B cell (primary cell): ENCODE measurements at regions of chr9 and their contacts with region 1.

Region 1: DNA sequence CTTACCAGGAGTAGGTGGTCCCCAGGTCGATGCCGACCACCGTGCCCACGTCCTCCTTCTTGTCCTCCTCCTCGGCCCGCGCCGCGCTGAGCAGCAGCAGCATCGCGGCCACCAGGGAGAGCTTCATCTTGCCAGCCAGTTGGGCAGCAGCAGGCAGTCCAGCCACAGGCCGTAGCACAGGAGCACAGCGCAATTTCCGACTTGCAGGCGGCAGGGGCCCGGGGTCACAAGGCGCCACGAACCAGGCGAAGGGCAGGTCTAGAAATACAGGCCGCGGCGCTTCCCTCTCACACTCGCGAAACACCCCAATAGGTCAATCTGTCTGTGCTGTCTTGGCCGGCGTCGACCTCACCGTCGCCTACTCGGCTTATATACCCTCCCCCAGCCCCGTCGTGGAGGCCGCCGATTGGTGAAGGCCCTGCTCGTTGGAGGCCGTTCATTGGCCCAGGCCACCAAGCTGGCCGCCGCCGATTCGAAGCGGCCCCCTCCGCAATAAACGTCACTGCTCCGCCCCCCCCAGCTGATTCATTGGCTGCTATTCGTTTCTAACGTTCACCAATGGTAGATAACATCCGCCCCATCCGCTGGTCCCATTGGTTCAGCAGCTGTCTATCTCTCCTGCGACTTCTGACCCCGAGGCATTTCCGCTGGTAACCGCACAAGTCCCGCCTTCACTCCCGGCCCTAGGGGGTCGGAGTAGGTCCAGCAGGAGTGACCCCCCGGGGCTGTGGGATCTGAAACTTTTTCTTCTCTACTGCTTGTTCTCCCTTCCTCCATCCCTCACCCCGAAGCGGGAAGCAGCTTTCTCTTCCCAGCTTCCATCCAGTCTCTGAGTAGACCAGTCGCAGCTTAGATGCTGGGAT is at the start of gene HSPA5:
- DNase-seq: peak; percentile 100
- ATAC-seq: peak; percentile 90
- H3K4me3 ChIP-seq: peak within 1 kb of the TSS; percentile 82 to 98 (median 92)
- H3K4me3 Mint-ChIP-seq: peak within 1 kb of the TSS; percentile 95
- H3K27ac ChIP-seq: peak within 1 kb of the TSS; percentile 98 to 99
- H3K27ac Mint-ChIP-seq: peak within 1 kb of the TSS; percentile 93
- H3K4me1 ChIP-seq: peaks cover 16 to 26% of the 10 kb centered on the region in 2 donors
- H3K4me1 Mint-ChIP-seq: peaks cover 50% of the 10 kb centered on the region
- H3K27me3 ChIP-seq: no peaks in the 10 kb centered on the region
- H3K27me3 Mint-ChIP-seq: no peaks in the 10 kb centered on the region
- CTCF ChIP-seq: no peak
- total RNA-seq, gene HSPA5: 40.1 and 42.6 TPM in 2 replicates

Region 2: DNA sequence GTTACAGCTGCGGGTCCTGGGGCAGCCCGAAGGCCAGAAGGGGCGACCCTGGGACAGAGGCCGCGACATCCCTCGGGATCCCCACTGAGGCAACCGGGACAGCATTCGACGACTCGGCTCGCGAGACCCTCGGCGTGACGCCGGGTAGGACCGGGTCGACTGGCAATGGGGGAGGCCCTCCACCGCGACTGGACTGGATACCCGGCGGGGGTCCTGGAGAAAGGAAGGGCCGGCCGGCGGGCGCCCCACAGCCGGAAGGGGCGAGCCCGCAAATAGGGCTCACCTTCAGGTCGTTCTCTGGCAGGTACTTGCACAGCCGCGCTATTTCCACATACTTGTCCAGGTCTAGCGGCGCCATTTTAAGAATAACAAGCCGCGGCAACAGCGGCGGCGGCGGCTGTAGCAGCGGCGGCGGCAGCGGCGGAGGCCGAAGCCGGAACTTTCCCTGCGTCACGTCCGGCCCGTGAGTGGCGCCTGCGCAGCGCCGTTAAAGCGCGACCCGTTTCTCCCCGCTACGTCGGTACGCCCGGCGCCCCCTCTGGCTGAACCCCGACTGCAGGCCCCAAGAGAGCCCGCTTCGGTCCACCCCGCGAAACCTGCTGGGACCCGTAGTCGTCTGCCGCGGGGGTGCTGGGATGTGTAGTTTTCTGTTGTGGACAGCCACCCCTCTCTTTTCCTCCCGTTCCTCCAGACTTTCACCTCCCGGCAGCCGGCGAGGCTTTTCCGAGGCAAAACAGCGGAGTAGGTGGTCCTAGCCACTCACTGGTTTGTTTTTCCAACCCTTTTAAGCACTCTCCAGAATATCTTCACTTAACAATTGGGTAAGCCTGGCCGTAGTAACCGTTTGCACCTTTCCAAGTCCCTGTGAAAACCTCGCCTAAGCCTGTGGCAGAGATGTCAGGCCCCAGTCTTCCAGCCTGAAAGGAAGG is 51.6 kb before region 1 on chr9 and contains the start of gene PPP6C:
- CTCF ChIA-PET with region 1: no interaction called
- POLR2A ChIA-PET with region 1: no interaction called
- intact Hi-C with region 1: loop called (anchors 1 kb)
- DNase-seq: peak; percentile 98
- ATAC-seq: peak; percentile 98
- H3K4me3 ChIP-seq: peak within 1 kb of the TSS; percentile 89 to 99 (median 99)
- H3K4me3 Mint-ChIP-seq: peak within 1 kb of the TSS; percentile 97
- H3K27ac ChIP-seq: peak within 1 kb of the TSS; percentile 91 to 98
- H3K27ac Mint-ChIP-seq: peak within 1 kb of the TSS; percentile 96
- H3K4me1 ChIP-seq: peaks cover 19 to 27% of the 10 kb centered on the region in 2 donors
- H3K4me1 Mint-ChIP-seq: peaks cover 39% of the 10 kb centered on the region
- H3K27me3 ChIP-seq: no peaks in the 10 kb centered on the region
- H3K27me3 Mint-ChIP-seq: no peaks in the 10 kb centered on the region
- CTCF ChIP-seq: peak; percentile 78
- total RNA-seq, gene PPP6C: 36.1 and 38.6 TPM in 2 replicates

Region 3: DNA sequence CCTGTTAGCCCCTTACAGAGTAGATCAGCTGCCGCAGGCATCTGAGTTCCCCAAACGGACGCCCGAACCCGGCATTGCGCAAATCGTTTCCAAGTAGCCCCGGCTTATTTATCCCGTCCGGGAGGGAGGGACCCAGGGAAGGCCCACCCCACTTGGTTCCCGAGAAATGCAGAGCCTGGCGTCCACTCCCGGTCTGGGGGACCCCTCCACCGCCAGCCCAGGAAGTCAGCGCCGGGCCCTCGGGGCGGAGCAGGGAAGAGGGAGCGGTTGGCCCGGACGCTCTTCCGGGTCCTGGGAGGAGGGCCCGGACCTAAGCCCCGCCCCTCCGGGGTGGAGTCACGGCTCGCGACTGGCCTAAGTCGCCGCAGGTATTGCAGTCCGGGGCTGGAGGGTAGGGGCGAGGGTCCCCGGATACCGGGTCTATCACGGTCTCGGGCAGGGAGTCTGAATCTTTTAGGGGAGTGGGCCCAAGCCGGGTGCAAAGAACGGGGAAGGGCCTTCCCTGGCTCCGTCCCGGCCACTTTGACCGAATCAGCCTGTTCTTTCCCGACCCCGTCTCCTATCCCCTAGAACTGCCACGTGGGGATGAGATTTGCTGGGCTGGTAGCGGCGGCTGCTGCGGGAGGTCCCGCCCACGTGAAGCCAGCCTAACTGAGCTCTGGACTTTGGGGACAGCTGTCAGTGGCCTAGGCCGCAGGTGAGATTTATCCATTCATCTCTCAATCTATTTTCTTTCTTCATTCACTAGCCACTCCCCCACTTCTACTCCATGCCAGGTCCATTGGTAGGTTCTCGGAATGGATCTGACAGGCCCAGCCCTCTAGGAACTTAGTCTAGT is 40.8 kb before region 1 on chr9 and contains the start of gene RABEPK:
- CTCF ChIA-PET with region 1: no interaction called
- POLR2A ChIA-PET with region 1: interaction called, 9 read pairs
- intact Hi-C with region 1: loop called (anchors 1 kb)
- DNase-seq: peak; percentile 94
- ATAC-seq: peak; percentile 98
- H3K4me3 ChIP-seq: peak within 1 kb of the TSS; percentile 61 to 96 (median 83)
- H3K4me3 Mint-ChIP-seq: peak within 1 kb of the TSS; percentile 96
- H3K27ac ChIP-seq: peak within 1 kb of the TSS; percentile 79 to 93
- H3K27ac Mint-ChIP-seq: peak within 1 kb of the TSS; percentile 95
- H3K4me1 ChIP-seq: peaks cover 10 to 16% of the 10 kb centered on the region in 2 donors
- H3K4me1 Mint-ChIP-seq: peaks cover 15% of the 10 kb centered on the region
- H3K27me3 ChIP-seq: no peaks in the 10 kb centered on the region
- H3K27me3 Mint-ChIP-seq: no peaks in the 10 kb centered on the region
- CTCF ChIP-seq: no peak
- total RNA-seq, gene RABEPK: 9.0 and 11.6 TPM in 2 replicates

Region 4: GRCh38 chr9:125214186-125214585 is 27.0 kb before region 1 on chr9:
- CTCF ChIA-PET with region 1: no interaction called
- POLR2A ChIA-PET with region 1: no interaction called
- intact Hi-C with region 1: no loop called
- DNase-seq: no peak
- ATAC-seq: no peak
- H3K4me3 ChIP-seq: no peak overlapping the region
- H3K4me3 Mint-ChIP-seq: no peak overlapping the region
- H3K27ac ChIP-seq: no peak overlapping the region
- H3K27ac Mint-ChIP-seq: no peak overlapping the region
- H3K4me1 ChIP-seq: no peaks in the 10 kb centered on the region
- H3K4me1 Mint-ChIP-seq: no peaks in the 10 kb centered on the region
- H3K27me3 ChIP-seq: no peaks in the 10 kb centered on the region
- H3K27me3 Mint-ChIP-seq: no peaks in the 10 kb centered on the region
- CTCF ChIP-seq: no peak